Mammary epithelial cell (primary cell): ENCODE measurements at regions of chr17 and their contacts with region 1.

Region 1: DNA sequence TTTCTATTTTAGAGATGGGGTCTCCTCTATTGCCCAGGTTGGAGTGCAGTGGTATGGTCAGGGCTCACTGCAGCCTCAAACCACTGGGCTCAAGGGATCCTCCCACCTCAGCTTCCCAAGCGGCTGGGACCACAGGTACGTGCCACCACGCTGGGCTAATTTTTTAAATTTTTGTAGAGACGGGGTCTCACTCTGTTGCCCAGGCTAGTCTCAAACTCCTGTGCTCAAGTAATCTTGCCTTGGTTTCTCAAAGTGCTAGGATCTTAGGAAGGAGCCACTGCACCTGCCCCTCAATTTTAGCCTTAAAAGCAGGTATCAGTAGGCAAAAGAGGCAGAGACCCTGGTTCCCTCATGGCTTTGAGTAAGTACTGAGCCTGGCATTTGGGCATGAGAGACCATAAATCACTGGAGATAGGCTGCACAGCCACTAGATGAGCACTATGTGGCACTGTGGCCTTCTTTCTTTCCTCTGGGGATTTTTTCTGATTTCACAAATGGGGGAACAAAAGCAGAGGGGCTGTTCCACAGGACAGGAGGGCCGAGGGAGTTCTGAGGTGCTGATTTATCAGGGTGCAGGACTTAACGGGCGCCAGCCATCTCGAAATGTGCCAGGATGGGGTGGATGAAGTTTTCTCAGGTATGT is 82.2 kb downstream of the PLXDC1 start:
- DNase-seq: peak; percentile 32
- H3K4me3 ChIP-seq: no peak overlapping the region
- H3K27ac ChIP-seq: no peak overlapping the region
- H3K4me1 ChIP-seq: peaks cover 19% of the 10 kb centered on the region
- H3K27me3 ChIP-seq: no peaks in the 10 kb centered on the region
- CTCF ChIP-seq: peak; percentile 70 to 75

Region 2: GRCh38 chr17:38970128-38970527 is 99.1 kb before region 1 on chr17:
- CTCF ChIA-PET with region 1: no interaction called
- dilution Hi-C with region 1: loop called (anchors 5 kb)
- in situ Hi-C with region 1: no loop called
- intact Hi-C with region 1: no loop called
- DNase-seq: no peak
- H3K4me3 ChIP-seq: no peak overlapping the region
- H3K27ac ChIP-seq: no peak overlapping the region
- H3K4me1 ChIP-seq: no peaks in the 10 kb centered on the region
- H3K27me3 ChIP-seq: no peaks in the 10 kb centered on the region
- CTCF ChIP-seq: peak in 1 of 2 donors; percentile 20

Region 3: DNA sequence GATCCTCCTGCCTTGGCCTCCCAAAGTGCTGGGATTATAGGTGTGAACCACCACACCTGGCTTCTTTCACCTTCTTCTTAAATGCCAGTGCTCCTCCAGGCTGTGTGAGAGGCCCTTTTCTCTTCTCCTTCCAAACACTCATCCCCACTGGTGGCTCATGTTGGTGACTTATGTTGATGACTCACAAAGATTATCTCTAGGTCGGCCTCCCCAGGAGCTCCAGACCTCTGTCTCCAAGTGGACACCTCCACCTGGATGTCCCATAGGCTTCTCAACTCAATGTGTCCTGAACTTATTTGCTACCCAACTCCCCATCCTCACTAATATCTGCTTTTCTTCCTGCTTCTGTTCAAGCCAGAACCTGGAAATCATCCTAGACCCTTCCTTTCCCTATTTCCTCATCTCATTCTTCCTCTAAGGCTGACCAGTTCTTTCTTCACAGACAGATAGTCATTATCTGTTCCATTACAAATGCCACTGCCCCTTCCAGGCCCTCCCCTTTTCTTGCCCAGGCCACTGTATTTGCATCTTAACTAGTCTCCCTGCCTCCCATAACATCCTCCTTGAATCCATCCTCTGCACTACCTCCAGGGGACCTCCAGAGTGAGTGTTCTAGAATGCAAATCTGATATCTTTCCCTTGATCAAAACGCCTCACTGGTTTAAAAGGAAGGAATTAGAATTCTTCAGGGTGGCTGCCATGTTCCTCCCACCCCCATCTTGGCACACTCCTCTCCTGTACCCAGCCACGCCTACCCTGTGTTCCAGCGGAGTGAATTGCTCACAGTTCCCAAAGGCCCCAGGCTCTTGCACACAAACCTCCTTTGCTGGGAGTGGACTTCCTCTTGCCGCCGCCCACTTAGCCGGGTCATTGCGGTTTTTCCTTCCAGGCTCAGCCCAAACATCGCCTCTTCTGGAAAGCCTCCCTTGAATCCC is 67.3 kb before region 1 on chr17:
- CTCF ChIA-PET with region 1: no interaction called
- dilution Hi-C with region 1: no loop called
- in situ Hi-C with region 1: no loop called
- intact Hi-C with region 1: loop called (anchors 5 kb)
- DNase-seq: peak; percentile 88
- H3K4me3 ChIP-seq: no peak overlapping the region
- H3K27ac ChIP-seq: peak overlapping the region; percentile 9
- H3K4me1 ChIP-seq: peaks cover 20% of the 10 kb centered on the region
- H3K27me3 ChIP-seq: no peaks in the 10 kb centered on the region
- CTCF ChIP-seq: no peak

Region 4: DNA sequence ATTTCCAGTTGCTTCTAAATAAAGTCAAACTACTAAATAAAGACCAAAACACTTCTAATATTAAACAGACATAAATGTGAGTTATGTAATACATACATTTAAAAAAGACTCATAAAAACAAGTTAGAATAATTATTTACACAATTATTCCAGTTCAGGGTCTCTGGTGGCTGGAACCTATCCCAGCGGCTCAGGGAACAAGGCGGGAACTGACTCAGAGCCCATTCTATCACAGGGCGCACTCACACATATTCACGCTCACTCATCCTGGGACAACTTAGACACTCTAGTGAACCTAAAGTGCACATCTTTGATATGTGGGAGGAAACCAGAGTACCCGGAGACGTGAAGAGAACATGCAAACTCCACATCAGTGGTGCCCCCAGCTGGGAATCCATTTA is 57.2 kb after region 1 on chr17:
- CTCF ChIA-PET with region 1: no interaction called
- dilution Hi-C with region 1: loop called (anchors 5 kb)
- in situ Hi-C with region 1: no loop called
- intact Hi-C with region 1: no loop called
- DNase-seq: no peak
- H3K4me3 ChIP-seq: no peak overlapping the region
- H3K27ac ChIP-seq: no peak overlapping the region
- H3K4me1 ChIP-seq: no peaks in the 10 kb centered on the region
- H3K27me3 ChIP-seq: no peaks in the 10 kb centered on the region
- CTCF ChIP-seq: no peak